ENCODE measurements at regions of chr14 and their contacts with region 1.

Region 1: DNA sequence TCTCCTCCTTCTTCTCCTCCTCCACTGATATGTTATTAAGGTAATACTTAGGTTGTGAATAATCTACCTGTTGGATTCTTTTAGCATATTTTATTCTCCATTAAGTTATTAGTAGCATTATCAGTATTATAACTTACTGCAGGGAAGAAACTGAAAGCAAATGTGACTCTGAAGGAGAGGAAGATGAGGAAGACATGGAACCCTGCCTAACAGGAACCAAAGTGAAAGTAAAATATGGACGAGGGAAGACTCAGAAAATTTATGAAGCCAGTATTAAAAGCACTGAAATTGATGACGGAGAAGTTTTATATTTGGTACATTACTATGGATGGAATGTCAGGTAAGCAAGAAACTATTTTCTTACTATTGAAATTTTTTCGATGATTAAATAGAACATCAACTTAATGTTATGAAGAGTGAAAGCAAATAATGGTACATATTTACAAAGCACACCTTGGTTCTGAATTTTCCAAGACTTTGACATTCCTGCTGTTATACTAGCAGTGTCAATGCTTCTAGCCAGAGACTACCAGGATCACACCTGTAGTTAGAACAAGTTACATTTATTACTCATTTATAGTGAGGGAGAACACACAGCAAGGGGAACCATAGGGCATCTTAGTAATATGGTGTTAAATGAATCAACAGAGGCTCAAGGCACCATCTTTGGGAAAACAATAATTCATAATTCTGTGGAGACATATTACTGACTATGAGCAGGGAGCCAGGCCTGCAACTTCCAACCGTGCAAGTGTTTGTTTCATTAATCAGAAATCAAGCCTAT is 42.0 kb upstream of the TOMM20L start:
- DNase-seq: peak in 2 of 9 experiments; percentile 6 to 36
- ATAC-seq: no peak
- H3K4me3 ChIP-seq: no peak overlapping the region
- H3K4me3 Mint-ChIP-seq: peak overlapping the region; percentile 72
- H3K27ac ChIP-seq: peak overlapping the region in 1 of 2 experiments; percentile 53
- H3K27ac Mint-ChIP-seq: peak overlapping the region; percentile 66
- H3K4me1 ChIP-seq: no peaks in the 10 kb centered on the region
- H3K4me1 Mint-ChIP-seq: peaks cover 34% of the 10 kb centered on the region
- H3K27me3 ChIP-seq: no peaks in the 10 kb centered on the region
- H3K27me3 Mint-ChIP-seq: no peaks in the 10 kb centered on the region
- CTCF ChIP-seq: no peak

Region 2: DNA sequence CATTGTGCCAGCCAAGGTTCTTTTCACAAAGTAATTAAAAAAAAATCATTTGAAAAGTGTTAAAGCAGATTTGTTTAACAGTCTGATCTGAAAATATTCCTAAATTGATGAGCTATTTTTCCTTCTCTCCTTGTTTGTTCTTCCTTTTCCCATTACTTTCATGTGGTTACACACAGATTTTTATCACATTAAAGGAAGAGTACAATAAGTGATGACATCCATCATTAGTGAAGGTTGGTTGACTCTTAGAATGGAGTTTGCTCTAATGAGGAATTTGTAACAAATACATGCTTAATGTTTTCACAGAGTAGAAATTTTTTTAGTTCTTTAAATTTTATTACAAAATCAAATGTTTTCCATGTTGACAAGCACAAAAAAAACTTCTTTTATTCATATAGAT is 23.1 kb after region 1 on chr14:
- CTCF ChIA-PET with region 1: no interaction called
- POLR2A ChIA-PET with region 1: no interaction called
- intact Hi-C with region 1: no loop called
- DNase-seq: no peak
- ATAC-seq: no peak
- H3K4me3 ChIP-seq: no peak overlapping the region
- H3K4me3 Mint-ChIP-seq: no peak overlapping the region
- H3K27ac ChIP-seq: no peak overlapping the region
- H3K27ac Mint-ChIP-seq: no peak overlapping the region
- H3K4me1 ChIP-seq: no peaks in the 10 kb centered on the region
- H3K4me1 Mint-ChIP-seq: no peaks in the 10 kb centered on the region
- H3K27me3 ChIP-seq: no peaks in the 10 kb centered on the region
- H3K27me3 Mint-ChIP-seq: no peaks in the 10 kb centered on the region
- CTCF ChIP-seq: no peak

Region 3: DNA sequence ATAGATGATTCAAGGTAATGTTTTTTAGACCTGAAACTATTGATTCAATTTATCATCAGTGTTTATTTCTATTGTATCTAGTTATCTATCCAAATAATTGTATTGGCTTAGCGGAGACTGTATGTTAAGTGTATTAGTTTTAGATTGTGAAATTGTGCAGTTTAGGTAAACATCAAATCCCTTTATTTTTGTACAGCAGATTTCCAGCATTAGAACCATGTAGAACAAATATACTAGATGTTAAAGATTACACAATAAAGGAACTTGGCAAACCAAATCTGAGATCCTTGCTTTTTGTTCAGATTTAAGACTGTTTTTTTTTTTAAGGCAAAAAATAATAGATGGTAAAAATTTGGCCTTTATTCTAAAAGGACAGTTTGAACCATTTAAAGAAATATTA is 1934.6 kb after region 1 on chr14:
- CTCF ChIA-PET with region 1: no interaction called
- POLR2A ChIA-PET with region 1: no interaction called
- intact Hi-C with region 1: loop called in 1 of 2 experiments (anchors 5 kb)
- DNase-seq: no peak
- ATAC-seq: no peak
- H3K4me3 ChIP-seq: no peak overlapping the region
- H3K4me3 Mint-ChIP-seq: no peak overlapping the region
- H3K27ac ChIP-seq: no peak overlapping the region
- H3K27ac Mint-ChIP-seq: no peak overlapping the region
- H3K4me1 ChIP-seq: no peaks in the 10 kb centered on the region
- H3K4me1 Mint-ChIP-seq: no peaks in the 10 kb centered on the region
- H3K27me3 ChIP-seq: no peaks in the 10 kb centered on the region
- H3K27me3 Mint-ChIP-seq: no peaks in the 10 kb centered on the region
- CTCF ChIP-seq: no peak

Measured in CD8-positive, alpha-beta T cell (primary cell).